Lower leg skin (tissue), 4 donors: ENCODE measurements at regions of chr2 and their contacts with region 1.

Region 1: DNA sequence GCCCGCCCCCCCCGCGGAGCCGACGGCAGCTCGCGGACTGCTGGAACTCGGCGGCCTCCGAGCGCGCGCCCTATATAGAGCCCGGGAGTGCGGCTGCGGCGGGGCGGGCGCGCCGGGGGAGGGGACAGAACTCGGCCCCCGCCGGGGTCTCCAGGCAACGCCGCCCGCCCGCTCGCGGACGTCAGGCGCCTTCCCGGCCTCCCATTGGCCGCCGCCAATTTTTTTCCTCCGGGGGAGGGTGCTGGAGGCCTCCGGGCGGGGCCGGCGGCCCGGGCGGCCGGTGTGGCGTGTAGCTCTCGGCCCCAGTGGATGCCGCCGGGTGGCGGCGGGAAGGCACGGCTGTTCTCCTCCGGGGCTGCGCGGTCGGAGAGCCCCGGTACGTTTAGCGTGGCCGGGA is at the start of gene ZFP36L2:
- DNase-seq: peak; percentile 93 to 99
- H3K4me3 ChIP-seq: peak within 1 kb of the TSS; percentile 93
- CTCF ChIP-seq: no peak
- POLR2A ChIP-seq: peak in 1 of 2 donors; percentile 99
- total RNA-seq, gene ZFP36L2: 137 to 329 (median 147) TPM

Region 2: GRCh38 chr2:42828487-42829425 is 397.8 kb before region 1 on chr2:
- intact Hi-C with region 1: loop called (anchors 5 kb)
- DNase-seq: peak; percentile 67 to 94
- H3K4me3 ChIP-seq: no peak overlapping the region
- CTCF ChIP-seq: peak in 1 of 3 donors; percentile 74
- POLR2A ChIP-seq: no peak

Region 3: GRCh38 chr2:42944779-42945415 is 281.7 kb before region 1 on chr2:
- intact Hi-C with region 1: loop called (anchors 10 kb)
- DNase-seq: no peak
- H3K4me3 ChIP-seq: no peak overlapping the region
- CTCF ChIP-seq: no peak
- POLR2A ChIP-seq: no peak

Region 4: DNA sequence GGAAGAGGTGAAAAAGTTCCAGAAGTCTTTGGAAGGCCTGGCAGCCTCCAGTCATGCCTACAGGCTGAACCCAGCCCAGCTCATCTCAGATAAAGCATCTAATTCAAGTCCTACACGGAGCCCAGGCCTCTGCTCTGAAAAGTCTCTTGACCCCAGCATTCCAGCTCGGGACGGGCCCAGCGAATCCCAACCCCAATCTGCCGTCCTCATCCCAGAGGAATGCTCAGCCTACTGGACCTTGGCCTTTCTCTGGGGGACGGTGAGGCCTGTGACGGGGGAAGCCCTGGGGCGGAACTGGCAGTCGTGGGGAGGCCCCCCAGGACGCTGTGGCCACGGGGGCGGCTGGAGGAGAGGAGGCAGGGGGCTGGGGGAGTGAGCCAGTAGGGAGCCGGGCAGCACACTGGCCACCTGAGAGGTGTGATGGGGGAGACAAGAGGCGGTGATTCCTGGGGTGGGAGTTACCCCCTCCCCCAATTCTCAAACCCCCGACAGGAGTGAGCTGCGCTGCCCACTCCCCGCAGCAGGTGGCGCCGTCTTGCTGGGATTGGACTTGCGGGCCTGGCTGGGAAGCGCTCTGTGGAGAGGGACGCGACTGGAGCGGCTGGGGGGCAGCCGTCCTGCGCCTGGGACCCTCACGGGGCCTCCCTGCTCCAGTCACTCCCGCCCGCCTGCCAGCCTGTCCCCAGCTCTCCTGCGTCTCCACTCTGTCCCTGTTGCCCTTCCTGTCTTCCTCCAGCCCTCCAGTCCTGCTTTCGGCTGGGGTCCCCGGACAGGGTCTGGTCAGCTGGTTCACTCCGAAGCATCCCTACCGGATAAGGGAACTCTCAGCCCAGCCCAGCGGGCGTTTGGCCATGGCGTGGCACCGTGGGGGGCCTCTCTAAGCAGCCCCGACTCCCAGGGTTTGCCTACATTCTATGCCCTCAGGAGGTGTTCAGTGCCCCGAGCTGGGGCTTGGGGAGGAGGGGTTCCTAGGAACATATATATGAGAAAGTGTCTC is 251.5 kb before region 1 on chr2:
- intact Hi-C with region 1: loop called (anchors 10 kb)
- DNase-seq: peak; percentile 62 to 96
- H3K4me3 ChIP-seq: no peak overlapping the region
- CTCF ChIP-seq: peak in 1 of 3 donors; percentile 96
- POLR2A ChIP-seq: no peak

Region 5: DNA sequence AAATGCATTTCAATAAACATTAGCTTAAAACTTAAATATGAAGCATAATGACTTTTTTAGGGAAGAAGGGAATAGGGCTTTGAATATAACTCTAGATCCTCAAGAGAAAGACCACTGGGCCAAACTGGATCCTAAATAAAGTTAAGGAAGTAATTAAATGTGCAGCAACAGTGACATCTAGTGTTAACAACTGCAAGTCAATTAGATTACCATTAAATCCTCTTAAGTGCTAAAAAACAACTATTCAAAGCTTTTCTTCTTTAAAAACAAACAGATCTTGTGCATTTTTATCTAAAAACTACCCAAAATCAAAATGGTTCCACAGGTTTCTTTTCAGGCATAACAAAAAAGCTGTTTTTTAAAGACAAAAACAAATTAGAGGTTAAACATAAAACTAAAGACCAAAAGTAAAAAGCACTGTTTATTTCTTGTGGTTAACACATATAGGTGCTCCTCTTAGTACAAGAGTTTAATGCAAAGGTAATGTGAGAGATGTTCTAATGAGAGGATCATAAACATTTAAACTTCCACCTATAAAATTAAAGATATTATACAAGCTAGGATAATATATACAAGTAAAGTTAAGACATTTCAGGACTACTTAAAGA is 257.9 kb after region 1 on chr2:
- intact Hi-C with region 1: loop called (anchors 10 kb)
- DNase-seq: no peak
- H3K4me3 ChIP-seq: no peak overlapping the region
- CTCF ChIP-seq: peak in 1 of 3 donors; percentile 38
- POLR2A ChIP-seq: no peak